Left cardiac atrium (tissue), 4 donors: ENCODE measurements at regions of chr1 and their contacts with region 1.

Region 1: GRCh38 chr1:99503276-99503747 is 142.6 kb upstream of the PALMD start:
- DNase-seq: peak; percentile 25
- ATAC-seq: peak; percentile 63 to 82

Region 2: GRCh38 chr1:99590578-99591209 is 87.4 kb after region 1 on chr1:
- intact Hi-C with region 1: loop called in 1 of 2 experiments (anchors 10 kb)
- DNase-seq: peak; percentile 60
- ATAC-seq: peak; percentile 79 to 82

Region 3: DNA sequence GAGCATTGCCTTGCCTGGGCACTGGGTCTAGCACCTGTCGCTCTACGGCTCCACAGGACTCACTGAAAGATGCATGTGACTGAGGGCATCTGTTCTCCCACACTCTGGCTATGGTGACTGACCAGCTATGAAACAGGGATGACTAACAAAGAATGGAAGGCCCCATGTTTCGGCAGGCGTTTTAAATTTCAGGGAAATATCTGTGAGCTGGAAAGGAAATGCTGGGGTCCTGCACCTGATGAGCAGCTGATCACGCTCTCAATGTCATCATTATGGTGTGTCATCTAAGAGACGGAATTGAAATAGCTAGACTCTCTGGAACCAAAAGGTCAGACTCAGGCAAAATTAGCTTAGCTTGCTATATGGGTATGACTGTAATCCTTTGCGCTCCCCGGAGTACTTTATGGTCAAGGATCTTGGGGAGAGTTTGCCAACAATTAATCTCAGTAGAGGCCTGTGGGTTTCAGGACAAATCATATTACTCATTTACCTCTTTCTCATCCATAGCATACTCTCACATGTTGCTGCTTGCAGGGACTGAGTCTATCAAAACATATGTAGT is 118.1 kb after region 1 on chr1:
- intact Hi-C with region 1: no loop called
- DNase-seq: no peak
- ATAC-seq: no peak